MCF 10A (cell line): ENCODE measurements at regions of chr2 and their contacts with region 1.

Region 1: GRCh38 chr2:106104332-106105062 is 89.6 kb downstream of the UXS1 start:
- DNase-seq: peak; percentile 76
- H3K4me3 Mint-ChIP-seq: no peak overlapping the region
- H3K27ac Mint-ChIP-seq: no peak overlapping the region
- H3K4me1 Mint-ChIP-seq: no peaks in the 10 kb centered on the region
- H3K27me3 Mint-ChIP-seq: no peaks in the 10 kb centered on the region
- CTCF ChIP-seq: peak; percentile 91

Region 2: GRCh38 chr2:106057206-106057963 is 47.1 kb before region 1 on chr2:
- CTCF ChIA-PET with region 1: no interaction called
- POLR2A ChIA-PET with region 1: no interaction called
- intact Hi-C with region 1: no loop called
- DNase-seq: peak; percentile 29
- H3K4me3 Mint-ChIP-seq: no peak overlapping the region
- H3K27ac Mint-ChIP-seq: no peak overlapping the region
- H3K4me1 Mint-ChIP-seq: peaks cover 32% of the 10 kb centered on the region
- H3K27me3 Mint-ChIP-seq: no peaks in the 10 kb centered on the region
- CTCF ChIP-seq: no peak

Region 3: GRCh38 chr2:106193977-106194778 is 89.7 kb after region 1 on chr2 and contains the start of gene UXS1:
- CTCF ChIA-PET with region 1: interaction called, 4 read pairs
- POLR2A ChIA-PET with region 1: no interaction called
- intact Hi-C with region 1: loop called (anchors 5 kb)
- DNase-seq: peak; percentile 96
- H3K4me3 Mint-ChIP-seq: peak within 1 kb of the TSS; percentile 69
- H3K27ac Mint-ChIP-seq: peak within 1 kb of the TSS; percentile 80
- H3K4me1 Mint-ChIP-seq: peaks cover 44% of the 10 kb centered on the region
- H3K27me3 Mint-ChIP-seq: no peaks in the 10 kb centered on the region
- CTCF ChIP-seq: no peak
- total RNA-seq, gene UXS1: 31.2 and 37.6 TPM in 2 replicates